ENCODE measurements at regions of chr3 and their contacts with region 1.

Region 1: DNA sequence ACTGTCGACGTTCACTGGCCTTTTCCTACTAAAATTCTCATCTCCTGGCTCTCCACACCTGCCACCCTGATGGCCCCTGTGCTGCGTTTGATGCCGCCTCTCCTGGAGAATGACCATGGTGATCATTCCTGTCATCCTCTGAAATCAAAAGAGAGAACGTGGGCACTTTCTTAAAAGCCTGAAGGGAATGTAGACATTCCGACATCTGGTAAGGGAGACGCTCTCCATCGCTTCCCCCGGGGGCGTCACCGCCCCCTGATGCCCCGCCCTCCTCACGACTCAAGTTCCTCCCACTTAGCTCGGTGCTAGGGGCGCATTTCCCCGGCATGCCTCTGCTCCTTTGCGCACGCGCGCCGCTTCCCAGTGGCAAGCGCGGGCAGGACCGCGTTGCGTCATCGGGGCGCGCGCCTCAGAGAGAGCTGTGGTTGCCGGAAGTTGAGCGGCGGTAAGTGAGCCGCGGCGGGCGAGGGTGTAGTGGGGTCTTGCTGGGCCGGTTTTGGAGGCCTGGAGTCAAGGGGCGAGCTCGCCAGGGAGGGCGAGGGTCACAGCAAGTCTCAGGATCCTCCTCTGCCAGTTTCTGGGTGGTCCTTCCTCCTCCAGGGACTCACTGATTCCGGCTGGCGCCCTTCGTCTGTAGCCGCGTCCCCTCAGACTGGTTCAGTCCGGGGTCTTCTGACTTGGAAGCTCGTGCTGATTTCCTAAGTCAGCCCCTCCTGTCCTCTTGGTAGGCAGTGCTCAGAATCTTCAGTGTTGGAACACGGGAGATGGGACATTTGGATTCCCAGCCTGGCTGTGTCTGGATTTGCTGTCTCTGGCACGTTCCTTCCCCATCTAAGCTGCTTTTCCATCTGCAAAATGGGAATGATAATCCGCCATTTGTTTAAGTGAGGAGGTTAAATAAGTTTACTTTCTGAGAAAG is at the start of gene ATG7:
- DNase-seq: peak; percentile 99

Region 2: GRCh38 chr3:11140054-11140712 is 132.1 kb before region 1 on chr3:
- CTCF ChIA-PET with region 1: no interaction called
- POLR2A ChIA-PET with region 1: no interaction called
- DNase-seq: no peak

Region 3: DNA sequence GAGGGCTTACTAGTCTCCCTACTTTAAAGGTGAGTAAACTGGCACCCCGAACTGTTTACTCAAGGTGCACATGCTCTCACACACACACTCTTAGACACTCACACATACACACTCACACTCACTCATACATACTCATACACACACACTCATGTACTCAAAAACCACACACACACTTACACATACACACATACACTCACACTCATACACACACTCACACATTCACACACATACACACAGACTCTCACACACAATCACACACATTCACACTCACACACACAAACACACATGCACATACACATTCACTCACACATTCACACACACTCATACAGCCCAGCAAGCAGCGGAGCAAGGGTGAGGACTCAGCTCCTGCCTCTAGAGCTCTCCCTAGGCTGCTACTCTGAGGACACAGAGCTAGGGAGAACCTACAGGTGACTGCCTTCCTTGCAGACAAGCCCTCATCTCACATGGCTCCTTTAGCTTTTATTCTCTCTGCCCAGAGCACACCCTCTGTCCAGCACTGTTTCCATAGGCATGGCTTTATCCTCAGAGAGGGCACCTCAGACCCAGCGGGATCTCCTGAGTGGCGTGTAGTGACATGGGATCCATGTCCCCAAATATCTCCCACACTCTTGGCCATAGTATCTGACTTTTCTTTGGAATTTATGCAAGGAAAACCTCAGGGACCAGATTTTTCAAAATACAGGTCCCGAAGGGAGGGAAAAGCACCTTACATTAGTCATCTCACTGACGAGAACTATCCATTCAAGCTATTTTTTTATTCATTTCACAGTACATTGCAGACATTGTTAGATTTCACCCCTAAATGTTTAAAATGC is 26.2 kb before region 1 on chr3:
- CTCF ChIA-PET with region 1: no interaction called
- POLR2A ChIA-PET with region 1: interaction called, 11 read pairs
- DNase-seq: no peak

Region 4: DNA sequence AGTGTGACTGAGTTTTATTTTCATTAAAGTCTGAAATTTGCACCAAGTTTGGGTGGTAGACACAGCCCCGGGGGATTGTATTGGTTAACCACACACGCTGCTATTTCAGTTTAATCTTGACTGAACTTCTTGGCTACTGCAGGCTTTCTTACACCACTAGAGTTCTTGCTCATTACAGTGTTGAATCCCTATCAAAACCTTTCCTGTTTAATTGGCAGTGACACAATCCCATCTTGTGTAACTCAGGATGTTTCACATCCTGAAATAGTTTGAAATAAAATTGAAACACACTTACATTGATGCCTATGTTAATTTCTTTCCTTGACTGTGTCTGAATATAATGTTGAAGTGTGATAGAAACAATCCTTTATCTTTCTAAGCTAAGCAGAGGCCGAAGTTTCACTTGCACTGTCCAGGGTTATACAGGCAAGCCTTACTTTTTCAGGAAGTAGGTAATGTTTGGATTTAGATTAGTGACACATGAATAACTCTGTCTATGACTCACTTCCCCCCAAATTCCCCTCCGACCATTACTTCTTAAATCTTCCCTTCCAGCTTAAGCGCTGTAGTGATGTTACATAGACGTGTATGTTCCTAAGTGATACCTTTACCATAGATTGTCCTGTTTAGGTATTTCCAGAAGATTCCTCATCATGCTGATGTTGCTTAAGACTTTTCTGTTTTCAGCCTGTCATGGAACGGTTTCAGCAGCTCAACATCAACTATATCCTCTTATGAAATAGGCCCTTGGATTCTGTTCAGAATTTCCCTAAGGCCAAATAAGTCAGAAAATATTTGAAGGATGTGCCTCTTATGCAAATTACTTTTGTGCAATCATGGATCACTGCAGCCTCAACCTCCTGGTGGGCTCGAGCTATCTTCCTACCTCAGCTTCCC is 16.8 kb after region 1 on chr3:
- CTCF ChIA-PET with region 1: no interaction called
- POLR2A ChIA-PET with region 1: interaction called, 20 read pairs
- DNase-seq: no peak

Region 5: DNA sequence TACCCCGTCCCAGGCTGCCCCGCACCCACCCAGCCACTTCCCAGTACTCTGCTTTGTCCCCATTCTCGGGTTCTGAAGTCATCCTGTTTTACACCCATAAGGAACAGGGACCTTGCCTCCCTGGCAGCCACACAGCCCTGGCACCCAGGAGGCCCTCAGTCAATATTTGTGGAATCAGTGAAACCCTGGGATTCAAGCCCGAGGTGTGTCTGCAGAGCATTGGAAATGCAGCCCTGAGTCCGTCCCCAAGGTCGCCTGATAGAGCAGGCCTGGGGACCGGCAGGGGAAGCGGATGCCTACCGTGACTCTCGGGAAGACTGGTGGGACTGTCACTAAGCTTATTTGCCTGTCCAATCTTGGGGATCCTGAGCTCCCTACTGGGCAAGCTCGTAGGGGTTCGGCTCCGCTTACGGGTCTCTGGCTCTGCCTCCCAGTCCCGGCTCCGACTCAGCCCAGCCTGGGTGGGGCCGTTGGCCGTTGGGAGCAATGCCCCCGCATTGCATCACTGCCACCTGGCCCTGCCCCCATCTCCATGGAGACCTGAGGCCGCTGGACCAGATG is 638.8 kb after region 1 on chr3:
- CTCF ChIA-PET with region 1: no interaction called
- POLR2A ChIA-PET with region 1: no interaction called
- DNase-seq: no peak

Measured in HEK293T (cell line).